GM18951 (cell line): ENCODE measurements at regions of chr17 and their contacts with region 1.

Region 1: DNA sequence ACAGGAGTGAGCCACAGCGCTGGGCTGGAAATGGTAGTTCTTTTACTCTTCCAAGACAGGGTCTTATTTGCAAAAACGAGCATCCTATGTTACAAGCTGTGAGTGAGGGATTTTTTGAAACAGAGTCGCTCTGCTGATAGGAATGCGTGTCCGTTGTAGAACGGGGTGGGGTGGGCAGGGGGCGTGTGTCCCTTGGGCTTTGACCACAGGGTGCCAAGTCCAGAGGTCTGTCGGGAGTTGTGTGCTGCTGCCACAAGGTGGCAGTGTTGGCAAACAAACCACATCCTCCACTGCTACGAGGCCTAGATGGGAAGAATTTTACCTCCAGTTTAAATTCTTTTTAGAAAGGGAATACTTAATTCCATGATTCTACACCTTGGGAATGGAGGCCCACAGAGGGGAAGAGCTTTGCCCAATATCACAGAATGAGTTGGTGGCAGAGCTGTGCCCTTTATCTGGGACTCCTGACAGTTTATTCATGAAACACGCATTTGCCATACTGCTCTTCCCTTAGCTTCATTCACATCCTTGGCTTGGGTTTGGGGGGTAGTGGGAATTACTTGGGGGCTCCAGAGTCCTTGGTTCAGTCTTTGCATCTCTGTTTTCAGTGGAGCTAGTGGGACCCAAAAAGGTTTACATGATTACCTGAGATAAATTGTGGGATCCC is 30.6 kb upstream of the ETV4 start:
- POLR2A ChIP-seq: no peak

Region 2: GRCh38 chr17:43673516-43674323 is 97.0 kb after region 1 on chr17:
- in situ Hi-C with region 1: loop called (anchors 5 kb)
- POLR2A ChIP-seq: no peak